Mammary epithelial cell (primary cell): ENCODE measurements at regions of chr5 and their contacts with region 1.

Region 1: DNA sequence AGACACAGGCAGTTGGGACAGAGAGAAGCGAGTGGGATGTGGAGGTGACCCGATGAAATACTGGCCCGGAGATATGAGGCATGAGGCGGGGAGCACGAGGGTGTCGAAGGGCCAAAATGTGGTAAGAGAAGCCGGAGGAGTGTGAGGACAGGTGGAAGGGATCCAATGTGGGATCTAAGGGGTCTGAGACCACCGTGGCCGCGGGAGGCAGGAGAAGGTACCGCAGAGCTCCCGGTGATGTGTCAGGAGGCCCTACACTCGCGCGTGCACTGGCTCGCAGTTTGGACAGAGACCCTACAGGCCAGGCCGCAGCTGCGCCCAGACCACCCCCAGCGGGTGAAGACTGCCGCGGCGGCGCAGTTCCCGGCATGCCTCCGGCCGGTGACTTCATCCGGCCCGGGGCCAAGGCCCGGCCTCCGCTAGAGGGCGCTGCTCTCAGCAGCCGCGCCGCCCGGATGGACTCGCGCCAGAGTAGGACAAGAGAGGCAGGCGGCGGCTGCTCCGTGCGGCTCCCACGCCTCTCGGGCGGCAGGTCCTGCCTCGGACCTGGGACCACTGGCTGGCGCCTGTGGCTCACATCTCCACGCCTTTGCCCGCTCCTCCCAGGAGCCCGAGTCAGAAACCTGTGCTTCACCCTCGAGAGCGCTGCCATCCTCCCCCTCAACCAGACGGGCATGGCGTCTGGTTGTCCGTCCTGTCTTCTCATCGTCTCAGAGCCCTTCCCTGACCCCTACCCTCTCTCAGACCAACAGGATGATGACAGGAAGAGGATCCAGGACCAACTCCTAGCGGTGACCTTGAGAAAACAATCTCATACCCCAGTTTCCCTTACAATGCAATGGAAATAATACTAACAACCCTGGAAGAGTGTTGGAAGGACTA is 35.4 kb upstream of the STING1 start:
- DNase-seq: peak; percentile 73
- H3K4me3 ChIP-seq: peak overlapping the region; percentile 67 to 74 (median 70)
- H3K27ac ChIP-seq: peak overlapping the region; percentile 39
- H3K4me1 ChIP-seq: peaks cover 21% of the 10 kb centered on the region
- H3K27me3 ChIP-seq: no peaks in the 10 kb centered on the region
- CTCF ChIP-seq: peak; percentile 75 to 98

Region 2: GRCh38 chr5:139287890-139288635 is 229.9 kb before region 1 on chr5:
- CTCF ChIA-PET with region 1: no interaction called
- dilution Hi-C with region 1: no loop called
- in situ Hi-C with region 1: no loop called
- intact Hi-C with region 1: loop called (anchors 1 kb)
- DNase-seq: no peak
- H3K4me3 ChIP-seq: no peak overlapping the region
- H3K27ac ChIP-seq: no peak overlapping the region
- H3K4me1 ChIP-seq: no peaks in the 10 kb centered on the region
- H3K27me3 ChIP-seq: no peaks in the 10 kb centered on the region
- CTCF ChIP-seq: peak in 1 of 2 donors; percentile 30

Region 3: DNA sequence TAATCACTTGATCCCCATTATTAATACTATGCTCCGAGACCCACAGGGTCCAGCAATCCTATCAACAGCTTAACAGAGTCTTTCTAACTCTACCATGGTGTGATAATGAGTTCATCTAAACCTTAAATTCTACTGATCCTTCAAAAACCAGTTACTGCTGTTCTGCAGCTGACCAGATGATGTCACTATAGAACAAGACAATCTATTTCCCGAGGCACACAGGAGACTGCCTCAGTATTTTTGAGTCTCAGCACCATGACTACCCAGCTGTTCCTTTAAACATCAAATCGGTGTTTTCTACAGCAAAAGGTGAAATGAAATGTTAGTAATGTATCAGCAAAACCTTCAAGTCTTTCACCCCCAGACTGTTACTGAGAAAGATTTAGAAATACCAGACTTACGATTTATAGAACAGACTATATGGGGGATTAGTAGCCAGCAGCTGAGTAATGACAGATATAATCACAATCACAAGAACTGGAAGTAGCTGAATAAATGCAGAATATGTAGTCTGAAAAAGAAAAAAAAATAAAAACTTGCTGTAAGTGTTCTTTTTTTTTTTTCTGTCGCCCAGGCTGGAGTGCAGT is 95.5 kb before region 1 on chr5:
- CTCF ChIA-PET with region 1: interaction called, 6 read pairs
- dilution Hi-C with region 1: no loop called
- in situ Hi-C with region 1: loop called (anchors 5 kb)
- intact Hi-C with region 1: loop called (anchors 1 kb)
- DNase-seq: peak; percentile 57
- H3K4me3 ChIP-seq: no peak overlapping the region
- H3K27ac ChIP-seq: no peak overlapping the region
- H3K4me1 ChIP-seq: peaks cover 7% of the 10 kb centered on the region
- H3K27me3 ChIP-seq: no peaks in the 10 kb centered on the region
- CTCF ChIP-seq: peak; percentile 89 to 98

Region 4: GRCh38 chr5:139560752-139561654 is 43.1 kb after region 1 on chr5 and contains the start of gene UBE2D2:
- CTCF ChIA-PET with region 1: no interaction called
- dilution Hi-C with region 1: no loop called
- in situ Hi-C with region 1: no loop called
- intact Hi-C with region 1: loop called (anchors 2 kb)
- DNase-seq: peak; percentile 98
- H3K4me3 ChIP-seq: peak within 1 kb of the TSS; percentile 69 to 87 (median 75)
- H3K27ac ChIP-seq: peak within 1 kb of the TSS; percentile 65
- H3K4me1 ChIP-seq: peaks cover 7% of the 10 kb centered on the region
- H3K27me3 ChIP-seq: no peaks in the 10 kb centered on the region
- CTCF ChIP-seq: no peak
- total RNA-seq, gene UBE2D2: 47.0 to 141 TPM

Region 5: GRCh38 chr5:139765409-139766217 is 247.7 kb after region 1 on chr5:
- CTCF ChIA-PET with region 1: no interaction called
- dilution Hi-C with region 1: no loop called
- in situ Hi-C with region 1: no loop called
- intact Hi-C with region 1: loop called (anchors 5 kb)
- DNase-seq: peak; percentile 56
- H3K4me3 ChIP-seq: peak overlapping the region; percentile 53 to 76 (median 59)
- H3K27ac ChIP-seq: no peak overlapping the region
- H3K4me1 ChIP-seq: no peaks in the 10 kb centered on the region
- H3K27me3 ChIP-seq: no peaks in the 10 kb centered on the region
- CTCF ChIP-seq: peak; percentile 55 to 69

Region 6: GRCh38 chr5:139844472-139845145 is 326.7 kb after region 1 on chr5:
- CTCF ChIA-PET with region 1: no interaction called
- dilution Hi-C with region 1: no loop called
- in situ Hi-C with region 1: no loop called
- intact Hi-C with region 1: no loop called
- DNase-seq: peak; percentile 41
- H3K4me3 ChIP-seq: no peak overlapping the region
- H3K27ac ChIP-seq: no peak overlapping the region
- H3K4me1 ChIP-seq: no peaks in the 10 kb centered on the region
- H3K27me3 ChIP-seq: no peaks in the 10 kb centered on the region
- CTCF ChIP-seq: peak; percentile 75 to 80